Heart right ventricle (tissue), 16 donors: ENCODE measurements at regions of chr4 and their contacts with region 1.

Region 1: GRCh38 chr4:108120789-108121188 is 47.9 kb downstream of the LEF1 start:
- DNase-seq: no peak
- ATAC-seq: no peak
- H3K4me3 ChIP-seq: no peak overlapping the region
- H3K27ac ChIP-seq: no peak overlapping the region
- H3K4me1 ChIP-seq: peaks cover 0 to 19% (median 0%) of the 10 kb centered on the region in 9 donors
- H3K27me3 ChIP-seq: no peaks in the 10 kb centered on the region
- CTCF ChIP-seq: no peak

Region 2: DNA sequence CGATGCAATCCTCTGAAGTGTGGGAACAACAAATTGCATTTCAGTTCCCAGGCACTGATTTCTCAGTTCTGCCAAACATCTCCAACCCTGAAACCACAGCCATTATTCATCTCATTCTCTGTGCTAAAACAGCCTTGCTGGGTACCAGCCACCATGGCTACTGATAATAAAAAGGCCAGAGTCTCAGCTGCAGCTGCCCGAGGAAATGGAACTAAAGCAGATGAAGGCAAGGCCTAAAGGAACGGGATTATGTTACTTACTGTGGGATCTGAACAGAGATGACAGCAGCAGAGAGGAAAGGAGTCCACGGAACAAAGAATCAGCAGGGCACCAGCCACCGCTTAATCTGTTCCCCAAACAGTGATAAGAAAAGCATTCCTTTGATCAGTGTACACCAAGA is 556.5 kb before region 1 on chr4:
- intact Hi-C with region 1: loop called in 1 of 10 experiments (anchors 5 kb)
- DNase-seq: no peak
- ATAC-seq: no peak
- H3K4me3 ChIP-seq: no peak overlapping the region
- H3K27ac ChIP-seq: no peak overlapping the region
- H3K4me1 ChIP-seq: no peaks in the 10 kb centered on the region
- H3K27me3 ChIP-seq: no peaks in the 10 kb centered on the region
- CTCF ChIP-seq: no peak